ENCODE measurements at regions of chr4 and their contacts with region 1.

Region 1: GRCh38 chr4:1289207-1290164 is at the start of gene MAEA:
- DNase-seq: peak; percentile 98 to 99 (median 98)
- ATAC-seq: peak; percentile 97 to 98 (median 98)
- H3K4me3 ChIP-seq: peak within 1 kb of the TSS; percentile 81 to 99 (median 96)
- H3K27ac ChIP-seq: peak within 1 kb of the TSS; percentile 75 to 96 (median 90)
- H3K4me1 ChIP-seq: peaks cover 10 to 50% (median 45%) of the 10 kb centered on the region in 12 donors
- H3K27me3 ChIP-seq: no peaks in the 10 kb centered on the region
- CTCF ChIP-seq: peak in 1 of 12 donors; percentile 6
- POLR2A ChIP-seq: peak in 1 of 2 donors; percentile 90
- total RNA-seq, gene MAEA: 41.5 to 57.2 (median 45.1) TPM

Region 2: GRCh38 chr4:1249148-1249730 is 40.2 kb before region 1 on chr4:
- intact Hi-C with region 1: loop called in 3 of 10 experiments (anchors 2 to 5 kb)
- DNase-seq: peak; percentile 89 to 93 (median 91)
- ATAC-seq: peak; percentile 25 to 69 (median 68)
- H3K4me3 ChIP-seq: peak overlapping the region; percentile 39 to 94 (median 78)
- H3K27ac ChIP-seq: peak overlapping the region; percentile 91 to 100 (median 98)
- H3K4me1 ChIP-seq: peaks cover 7 to 54% (median 49%) of the 10 kb centered on the region in 12 donors
- H3K27me3 ChIP-seq: no peaks in the 10 kb centered on the region
- CTCF ChIP-seq: peak in 1 of 12 donors; percentile 13
- POLR2A ChIP-seq: peak in 1 of 2 donors; percentile 63

Region 3: GRCh38 chr4:1309261-1310010 is 19.9 kb after region 1 on chr4:
- intact Hi-C with region 1: loop called in 1 of 10 experiments (anchors 2 kb)
- DNase-seq: peak; percentile 88 to 92 (median 91)
- ATAC-seq: peak; percentile 95 to 98 (median 96)
- H3K4me3 ChIP-seq: peak overlapping the region in 11 of 12 donors; percentile 17 to 60 (median 46)
- H3K27ac ChIP-seq: peak overlapping the region in 11 of 12 donors; percentile 1 to 78 (median 59)
- H3K4me1 ChIP-seq: peaks cover 0 to 41% (median 35%) of the 10 kb centered on the region in 12 donors
- H3K27me3 ChIP-seq: no peaks in the 10 kb centered on the region
- CTCF ChIP-seq: peak in 1 of 12 donors; percentile 16
- POLR2A ChIP-seq: peak in 1 of 2 donors; percentile 19

Region 4: GRCh38 chr4:1337376-1337860 is 47.9 kb after region 1 on chr4:
- intact Hi-C with region 1: loop called in 2 of 10 experiments (anchors 5 kb)
- DNase-seq: peak in 1 of 5 donors; percentile 22
- ATAC-seq: peak in 1 of 4 donors; percentile 7
- H3K4me3 ChIP-seq: no peak overlapping the region
- H3K27ac ChIP-seq: no peak overlapping the region
- H3K4me1 ChIP-seq: no peaks in the 10 kb centered on the region
- H3K27me3 ChIP-seq: no peaks in the 10 kb centered on the region
- CTCF ChIP-seq: no peak
- POLR2A ChIP-seq: no peak

Measured in heart left ventricle (tissue), 16 donors.